ENCODE measurements at regions of chrX and their contacts with region 1.

Region 1: GRCh38 chrX:25144043-25144940 is 128.5 kb upstream of the ARX start:
- DNase-seq: peak; percentile 60
- H3K4me3 Mint-ChIP-seq: peak overlapping the region; percentile 54
- H3K27ac Mint-ChIP-seq: no peak overlapping the region
- H3K4me1 Mint-ChIP-seq: no peaks in the 10 kb centered on the region
- H3K27me3 Mint-ChIP-seq: peaks cover under 1% of the 10 kb centered on the region
- CTCF ChIP-seq: peak; percentile 74

Region 2: DNA sequence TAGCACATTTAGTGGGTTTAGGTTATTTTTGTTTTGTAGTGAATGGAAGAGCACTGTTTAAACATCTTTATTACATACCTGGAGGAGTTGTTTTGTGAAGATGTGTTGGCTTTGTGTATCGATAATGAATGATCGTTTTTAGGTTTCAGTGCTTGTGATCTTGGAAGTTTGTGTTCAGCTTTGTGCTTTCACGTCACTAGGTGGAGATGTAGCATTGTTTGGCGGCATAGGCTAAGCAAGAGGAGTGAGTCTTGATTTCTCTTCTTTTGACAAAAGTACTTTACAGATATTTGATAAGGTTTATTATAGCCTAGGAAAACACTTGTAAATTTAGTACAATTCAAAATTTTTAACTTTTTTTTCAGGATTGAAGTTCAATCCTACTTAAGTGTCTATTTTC is 628.8 kb before region 1 on chrX:
- CTCF ChIA-PET with region 1: no interaction called
- POLR2A ChIA-PET with region 1: no interaction called
- intact Hi-C with region 1: loop called (anchors 2 kb)
- DNase-seq: peak; percentile 30
- H3K4me3 Mint-ChIP-seq: no peak overlapping the region
- H3K27ac Mint-ChIP-seq: no peak overlapping the region
- H3K4me1 Mint-ChIP-seq: no peaks in the 10 kb centered on the region
- H3K27me3 Mint-ChIP-seq: peaks cover 75% of the 10 kb centered on the region
- CTCF ChIP-seq: peak; percentile 14

Region 3: GRCh38 chrX:24838629-24839028 is 305.7 kb before region 1 on chrX:
- CTCF ChIA-PET with region 1: interaction called, 198 read pairs
- POLR2A ChIA-PET with region 1: interaction called, 5 read pairs
- intact Hi-C with region 1: loop called (anchors 1 kb)
- DNase-seq: peak; percentile 49
- H3K4me3 Mint-ChIP-seq: no peak overlapping the region
- H3K27ac Mint-ChIP-seq: no peak overlapping the region
- H3K4me1 Mint-ChIP-seq: no peaks in the 10 kb centered on the region
- H3K27me3 Mint-ChIP-seq: no peaks in the 10 kb centered on the region
- CTCF ChIP-seq: peak; percentile 51

Region 4: GRCh38 chrX:25034889-25035288 is 109.4 kb before region 1 on chrX:
- CTCF ChIA-PET with region 1: interaction called, 5 read pairs
- POLR2A ChIA-PET with region 1: no interaction called
- intact Hi-C with region 1: loop called (anchors 1 kb)
- DNase-seq: peak; percentile 39
- H3K4me3 Mint-ChIP-seq: no peak overlapping the region
- H3K27ac Mint-ChIP-seq: no peak overlapping the region
- H3K4me1 Mint-ChIP-seq: no peaks in the 10 kb centered on the region
- H3K27me3 Mint-ChIP-seq: no peaks in the 10 kb centered on the region
- CTCF ChIP-seq: peak; percentile 20

Region 5: GRCh38 chrX:25156323-25156722 is 12.0 kb after region 1 on chrX:
- CTCF ChIA-PET with region 1: interaction called, 33 read pairs
- POLR2A ChIA-PET with region 1: no interaction called
- intact Hi-C with region 1: no loop called
- DNase-seq: peak; percentile 32
- H3K4me3 Mint-ChIP-seq: no peak overlapping the region
- H3K27ac Mint-ChIP-seq: no peak overlapping the region
- H3K4me1 Mint-ChIP-seq: peaks cover 16% of the 10 kb centered on the region
- H3K27me3 Mint-ChIP-seq: no peaks in the 10 kb centered on the region
- CTCF ChIP-seq: no peak

Region 6: GRCh38 chrX:25285598-25285997 is 141.3 kb after region 1 on chrX:
- CTCF ChIA-PET with region 1: no interaction called
- POLR2A ChIA-PET with region 1: no interaction called
- intact Hi-C with region 1: no loop called
- DNase-seq: peak; percentile 70
- H3K4me3 Mint-ChIP-seq: no peak overlapping the region
- H3K27ac Mint-ChIP-seq: no peak overlapping the region
- H3K4me1 Mint-ChIP-seq: peaks cover 6% of the 10 kb centered on the region
- H3K27me3 Mint-ChIP-seq: no peaks in the 10 kb centered on the region
- CTCF ChIP-seq: no peak